CD8-positive, alpha-beta T cell (primary cell): ENCODE measurements at regions of chr3 and their contacts with region 1.

Region 1: GRCh38 chr3:27827041-27827440 is 104.9 kb upstream of the EOMES start:
- DNase-seq: peak in 1 of 9 experiments; percentile 14
- ATAC-seq: no peak
- H3K4me3 ChIP-seq: no peak overlapping the region
- H3K4me3 Mint-ChIP-seq: no peak overlapping the region
- H3K27ac ChIP-seq: no peak overlapping the region
- H3K27ac Mint-ChIP-seq: no peak overlapping the region
- H3K4me1 ChIP-seq: peaks cover 8% of the 10 kb centered on the region
- H3K4me1 Mint-ChIP-seq: peaks cover 25% of the 10 kb centered on the region
- H3K27me3 ChIP-seq: no peaks in the 10 kb centered on the region
- H3K27me3 Mint-ChIP-seq: no peaks in the 10 kb centered on the region
- CTCF ChIP-seq: no peak

Region 2: GRCh38 chr3:27792869-27793268 is 34.2 kb before region 1 on chr3:
- CTCF ChIA-PET with region 1: no interaction called
- POLR2A ChIA-PET with region 1: no interaction called
- intact Hi-C with region 1: loop called in 1 of 2 experiments (anchors 5 kb)
- DNase-seq: no peak
- ATAC-seq: no peak
- H3K4me3 ChIP-seq: no peak overlapping the region
- H3K4me3 Mint-ChIP-seq: no peak overlapping the region
- H3K27ac ChIP-seq: no peak overlapping the region
- H3K27ac Mint-ChIP-seq: no peak overlapping the region
- H3K4me1 ChIP-seq: no peaks in the 10 kb centered on the region
- H3K4me1 Mint-ChIP-seq: peaks cover 5% of the 10 kb centered on the region
- H3K27me3 ChIP-seq: no peaks in the 10 kb centered on the region
- H3K27me3 Mint-ChIP-seq: no peaks in the 10 kb centered on the region
- CTCF ChIP-seq: no peak